CD14-positive monocyte (primary cell): ENCODE measurements at regions of chr12 and their contacts with region 1.

Region 1: DNA sequence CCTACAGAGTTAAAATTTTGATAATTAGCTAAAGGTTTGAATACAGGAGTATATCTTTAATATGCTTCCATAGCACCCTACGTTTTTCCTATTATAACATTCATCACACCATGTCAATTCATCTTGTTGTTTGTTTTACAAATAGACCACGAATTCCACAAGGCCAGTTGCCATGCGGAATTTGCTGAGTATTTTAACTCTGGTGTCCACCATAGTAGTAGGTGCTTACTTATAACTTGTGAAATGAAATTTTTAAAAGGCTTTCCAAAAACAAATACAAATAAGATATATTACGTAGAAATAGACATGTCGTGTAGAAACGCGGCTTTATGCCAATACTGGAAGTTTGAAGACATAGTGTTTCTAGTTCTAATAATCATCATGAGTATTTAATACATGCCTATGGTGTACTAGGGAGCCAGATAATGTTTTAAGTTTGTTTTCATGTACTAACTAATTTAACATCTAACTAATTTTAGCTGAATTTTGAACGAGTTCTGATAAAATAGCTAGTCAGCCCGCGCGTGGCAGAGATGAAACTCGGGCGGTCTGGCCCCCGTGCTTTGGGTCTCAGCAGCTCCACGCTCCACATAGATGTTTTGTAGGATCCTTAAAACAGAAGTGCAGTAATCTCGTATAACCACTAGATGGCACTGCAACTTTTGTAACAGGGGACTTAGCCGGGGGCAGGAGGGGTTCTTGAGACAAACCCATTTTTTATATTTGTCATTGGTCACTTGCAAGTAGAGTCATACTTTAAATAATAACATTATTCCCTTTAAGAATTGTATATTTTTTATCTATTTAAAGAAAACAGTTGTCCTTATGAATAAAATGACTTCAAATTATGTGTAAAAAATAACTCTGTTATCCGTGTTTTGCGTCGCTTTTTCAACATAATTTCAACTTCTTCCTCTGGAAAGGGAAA is 10.2 kb downstream of the CD69 start:
- DNase-seq: peak; percentile 58 to 78 (median 78)
- H3K4me3 ChIP-seq: peak overlapping the region in 2 of 3 experiments; percentile 11 to 45
- H3K4me3 Mint-ChIP-seq: peak overlapping the region; percentile 27 to 60
- H3K27ac ChIP-seq: no peak overlapping the region
- H3K27ac Mint-ChIP-seq: peak overlapping the region in 3 of 7 donors; percentile 27 to 70 (median 68)
- H3K4me1 ChIP-seq: peaks cover 4 to 13% of the 10 kb centered on the region in 2 donors
- H3K4me1 Mint-ChIP-seq: peaks cover 14% of the 10 kb centered on the region
- H3K27me3 ChIP-seq: no peaks in the 10 kb centered on the region
- H3K27me3 Mint-ChIP-seq: peaks cover 0 to 1% (median 0%) of the 10 kb centered on the region in 3 donors
- CTCF ChIP-seq: peak; percentile 94

Region 2: GRCh38 chr12:9687228-9687627 is 63.3 kb before region 1 on chr12:
- intact Hi-C with region 1: no loop called
- DNase-seq: no peak
- H3K4me3 ChIP-seq: no peak overlapping the region
- H3K4me3 Mint-ChIP-seq: no peak overlapping the region
- H3K27ac ChIP-seq: no peak overlapping the region
- H3K27ac Mint-ChIP-seq: no peak overlapping the region
- H3K4me1 ChIP-seq: peaks cover 0 to 9% of the 10 kb centered on the region in 2 donors
- H3K4me1 Mint-ChIP-seq: peaks cover 16% of the 10 kb centered on the region
- H3K27me3 ChIP-seq: no peaks in the 10 kb centered on the region
- H3K27me3 Mint-ChIP-seq: no peaks in the 10 kb centered on the region
- CTCF ChIP-seq: no peak

Region 3: GRCh38 chr12:9797722-9798619 is 47.4 kb after region 1 on chr12:
- intact Hi-C with region 1: loop called (anchors 5 kb)
- DNase-seq: peak; percentile 41 to 69 (median 68)
- H3K4me3 ChIP-seq: no peak overlapping the region
- H3K4me3 Mint-ChIP-seq: no peak overlapping the region
- H3K27ac ChIP-seq: no peak overlapping the region
- H3K27ac Mint-ChIP-seq: no peak overlapping the region
- H3K4me1 ChIP-seq: peaks cover 19 to 26% of the 10 kb centered on the region in 2 donors
- H3K4me1 Mint-ChIP-seq: peaks cover 40% of the 10 kb centered on the region
- H3K27me3 ChIP-seq: no peaks in the 10 kb centered on the region
- H3K27me3 Mint-ChIP-seq: peaks cover 0 to 1% (median 0%) of the 10 kb centered on the region in 3 donors
- CTCF ChIP-seq: peak; percentile 74

Region 4: DNA sequence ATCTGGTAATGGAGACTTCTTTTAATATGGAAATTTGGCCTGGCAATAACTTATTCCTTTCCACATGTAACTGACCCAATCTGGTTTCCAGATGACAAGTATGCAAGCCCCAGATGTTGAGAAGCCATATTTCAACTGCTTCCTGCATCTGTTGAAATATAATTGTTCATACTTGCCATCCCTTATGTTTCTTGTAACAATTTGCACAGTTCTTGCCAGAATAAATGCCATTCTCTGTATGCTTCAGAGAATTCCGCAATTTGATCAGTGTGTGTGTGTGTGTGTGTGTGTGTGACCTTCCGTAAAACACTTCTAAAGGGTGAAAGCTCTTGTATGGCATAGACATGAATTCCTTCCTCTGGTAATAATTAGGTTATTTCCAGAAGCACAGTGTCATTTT is 183.4 kb after region 1 on chr12:
- intact Hi-C with region 1: loop called (anchors 5 to 10 kb)
- DNase-seq: no peak
- H3K4me3 ChIP-seq: no peak overlapping the region
- H3K4me3 Mint-ChIP-seq: no peak overlapping the region
- H3K27ac ChIP-seq: no peak overlapping the region
- H3K27ac Mint-ChIP-seq: no peak overlapping the region
- H3K4me1 ChIP-seq: peaks cover 0 to 9% of the 10 kb centered on the region in 2 donors
- H3K4me1 Mint-ChIP-seq: peaks cover 15% of the 10 kb centered on the region
- H3K27me3 ChIP-seq: no peaks in the 10 kb centered on the region
- H3K27me3 Mint-ChIP-seq: peaks cover 0 to 4% (median 0%) of the 10 kb centered on the region in 3 donors
- CTCF ChIP-seq: no peak